ENCODE measurements at regions of chr2 and their contacts with region 1.

Region 1: GRCh38 chr2:21042958-21043743 is 722 bp downstream of the APOB start:
- DNase-seq: peak; percentile 53 to 90 (median 68)
- ATAC-seq: peak; percentile 86
- H3K4me3 ChIP-seq: no peak overlapping the region
- H3K27ac ChIP-seq: no peak overlapping the region
- H3K4me1 ChIP-seq: peaks cover 5 to 14% of the 10 kb centered on the region in 2 donors
- H3K27me3 ChIP-seq: peaks cover 0 to 48% of the 10 kb centered on the region in 2 donors
- CTCF ChIP-seq: peak; percentile 90 to 99

Region 2: GRCh38 chr2:21118302-21118920 is 75.3 kb after region 1 on chr2:
- intact Hi-C with region 1: loop called in 1 of 2 experiments (anchors 5 kb)
- DNase-seq: peak in 2 of 4 donors; percentile 10 to 18
- ATAC-seq: peak; percentile 56
- H3K4me3 ChIP-seq: no peak overlapping the region
- H3K27ac ChIP-seq: no peak overlapping the region
- H3K4me1 ChIP-seq: no peaks in the 10 kb centered on the region
- H3K27me3 ChIP-seq: no peaks in the 10 kb centered on the region
- CTCF ChIP-seq: peak in 1 of 2 donors; percentile 45

Region 3: GRCh38 chr2:21220930-21221329 is 177.8 kb after region 1 on chr2:
- intact Hi-C with region 1: no loop called
- DNase-seq: no peak
- ATAC-seq: peak; percentile 54
- H3K4me3 ChIP-seq: no peak overlapping the region
- H3K27ac ChIP-seq: no peak overlapping the region
- H3K4me1 ChIP-seq: no peaks in the 10 kb centered on the region
- H3K27me3 ChIP-seq: no peaks in the 10 kb centered on the region
- CTCF ChIP-seq: no peak

Measured in left lung (tissue), 14 donors.